Activated T-helper 1 cell treated with anti-CD3 and anti-CD28 coated beads, Interleukin-12 subunit alpha, Interleukin-12 subunit beta, Interleukin-2, Interleukin-4 antibody, amounts not matched to agents 30 ng/mL and 10 ng/mL and 1 ng/mL, durations not matched to agents 14 hours and 24 hours and 36 hours (primary cell): ENCODE measurements at regions of chr12 and their contacts with region 1.

Region 1: DNA sequence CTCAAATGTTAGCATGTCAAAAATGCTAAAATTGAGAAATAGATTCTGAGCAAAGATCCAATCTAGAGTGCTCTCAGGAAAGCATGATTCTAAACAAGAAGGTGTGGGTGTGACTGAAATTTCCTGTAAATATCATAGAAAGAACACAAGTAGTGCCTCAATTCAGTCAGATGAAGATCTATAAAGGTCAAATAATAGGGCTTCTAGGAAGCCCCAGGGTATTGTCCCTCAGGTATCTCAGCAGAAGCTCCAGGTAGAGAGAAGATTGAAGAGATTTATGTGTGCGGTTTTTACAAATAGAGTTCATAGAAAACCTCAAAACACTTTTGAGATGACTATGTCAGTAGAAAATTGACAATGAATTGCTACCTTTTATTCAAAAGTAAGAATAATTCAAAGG is 13.0 kb downstream of the KLRD1 start:
- DNase-seq: no peak
- H3K4me3 Mint-ChIP-seq: no peak overlapping the region
- H3K27ac Mint-ChIP-seq: peak overlapping the region; percentile 26
- H3K4me1 Mint-ChIP-seq: peaks cover 23% of the 10 kb centered on the region
- H3K27me3 Mint-ChIP-seq: peaks cover 13% of the 10 kb centered on the region

Region 2: DNA sequence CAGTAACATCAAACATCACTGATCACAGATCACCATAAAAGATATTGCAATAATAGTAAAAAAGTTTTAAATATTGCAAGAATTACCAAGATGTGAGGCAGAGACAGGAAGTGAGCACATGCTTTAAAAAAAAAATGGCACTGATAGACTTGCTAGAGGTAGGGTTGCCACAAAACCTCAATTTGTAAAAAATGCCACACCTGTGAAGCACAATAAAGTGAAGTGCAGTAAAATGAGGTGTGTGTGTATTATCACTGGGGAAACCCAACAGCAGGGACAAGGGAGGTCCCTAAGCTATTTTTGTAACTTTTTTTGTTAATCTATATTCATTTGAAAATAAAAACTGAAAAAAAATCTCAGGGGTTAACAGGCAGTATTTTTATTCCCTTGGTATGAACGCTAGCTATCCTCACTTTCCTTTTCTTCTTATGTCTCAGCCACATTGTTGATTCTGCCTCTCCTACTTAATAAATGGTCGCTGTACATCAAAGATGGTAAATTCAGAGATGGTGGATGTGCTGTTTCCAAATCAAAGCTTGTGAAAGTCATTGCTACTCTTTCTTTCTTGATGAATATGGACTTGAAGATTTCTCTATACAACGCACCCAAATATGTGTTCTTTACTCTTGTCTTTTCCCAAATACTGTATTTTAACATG is 26.9 kb before region 1 on chr12:
- intact Hi-C with region 1: loop called (anchors 1 kb)
- DNase-seq: no peak
- H3K4me3 Mint-ChIP-seq: no peak overlapping the region
- H3K27ac Mint-ChIP-seq: no peak overlapping the region
- H3K4me1 Mint-ChIP-seq: peaks cover 31% of the 10 kb centered on the region
- H3K27me3 Mint-ChIP-seq: peaks cover 11% of the 10 kb centered on the region

Region 3: GRCh38 chr12:10364815-10365622 is 44.4 kb after region 1 on chr12:
- intact Hi-C with region 1: loop called (anchors 1 kb)
- DNase-seq: peak; percentile 52
- H3K4me3 Mint-ChIP-seq: no peak overlapping the region
- H3K27ac Mint-ChIP-seq: no peak overlapping the region
- H3K4me1 Mint-ChIP-seq: no peaks in the 10 kb centered on the region
- H3K27me3 Mint-ChIP-seq: peaks cover 39% of the 10 kb centered on the region

Region 4: GRCh38 chr12:10540776-10541205 is 220.1 kb after region 1 on chr12:
- intact Hi-C with region 1: loop called (anchors 1 kb)
- DNase-seq: no peak
- H3K4me3 Mint-ChIP-seq: no peak overlapping the region
- H3K27ac Mint-ChIP-seq: peak overlapping the region; percentile 57
- H3K4me1 Mint-ChIP-seq: peaks cover 12% of the 10 kb centered on the region
- H3K27me3 Mint-ChIP-seq: peaks cover 5% of the 10 kb centered on the region

Region 5: DNA sequence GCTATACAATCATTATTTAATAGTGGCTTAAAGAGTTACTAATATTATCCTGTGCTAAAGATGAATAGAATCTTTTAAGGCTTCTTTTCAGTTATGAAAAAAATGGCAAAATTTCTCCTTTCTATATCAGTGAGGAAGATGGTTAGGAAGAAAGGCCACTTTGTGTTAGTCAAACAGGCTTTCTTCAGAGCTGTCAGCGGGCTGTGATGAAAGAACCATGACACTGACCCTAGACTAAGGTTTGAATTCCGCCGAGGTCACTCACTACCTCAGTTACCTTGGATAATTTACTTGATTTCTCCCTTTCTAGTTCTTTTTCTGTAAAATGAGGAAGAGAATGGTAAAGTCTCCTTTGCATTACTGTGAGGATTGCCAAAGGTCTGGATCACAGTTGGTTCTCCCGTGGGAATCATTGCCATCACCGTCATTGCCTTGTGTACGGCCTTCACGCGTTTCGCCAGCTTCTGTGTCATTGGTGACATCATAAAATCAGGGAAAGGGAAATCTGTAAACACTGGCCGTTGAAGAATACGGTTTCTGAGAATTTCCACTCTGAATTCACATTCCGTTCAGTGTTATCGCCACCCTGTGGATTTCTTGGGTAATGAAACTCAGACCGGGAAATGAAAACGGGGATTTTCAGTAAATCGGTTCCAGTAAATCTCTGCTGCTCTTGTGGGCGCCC is 429.2 kb after region 1 on chr12:
- intact Hi-C with region 1: loop called (anchors 5 kb)
- DNase-seq: peak; percentile 66
- H3K4me3 Mint-ChIP-seq: peak overlapping the region; percentile 62
- H3K27ac Mint-ChIP-seq: peak overlapping the region; percentile 34
- H3K4me1 Mint-ChIP-seq: peaks cover 36% of the 10 kb centered on the region
- H3K27me3 Mint-ChIP-seq: peaks cover 24% of the 10 kb centered on the region